ENCODE measurements at regions of chr19 and their contacts with region 1.

Region 1: DNA sequence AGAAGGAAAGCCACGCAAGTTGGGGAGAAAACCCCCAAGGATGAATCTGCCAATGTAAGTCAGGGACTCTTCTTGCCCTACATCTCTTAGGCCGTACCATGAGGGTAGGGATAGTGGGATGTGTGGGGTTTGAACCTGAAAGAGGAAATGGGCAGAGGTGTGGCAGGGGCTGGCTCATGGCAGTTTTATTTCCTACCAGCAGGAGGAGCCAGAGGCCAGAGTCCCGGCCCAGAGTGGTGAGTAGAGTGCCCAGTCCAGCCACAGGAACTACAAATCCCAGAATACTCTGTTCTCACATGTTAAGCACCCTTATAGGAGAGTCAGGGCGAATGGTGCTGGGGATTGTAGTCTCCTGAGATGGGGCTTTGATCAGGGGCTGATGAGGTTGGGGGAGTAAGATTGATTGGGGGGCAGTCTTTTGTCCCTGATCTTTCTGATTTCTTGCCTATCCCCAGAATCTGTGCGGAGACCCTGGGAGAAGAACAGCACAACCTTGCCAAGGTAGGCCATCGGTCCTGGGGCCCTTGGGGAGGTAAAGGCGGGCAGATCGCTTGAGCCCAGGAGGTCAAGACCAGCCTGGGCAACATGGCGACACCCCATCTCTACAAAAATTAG is 16.5 kb downstream of the VASP start:
- DNase-seq: peak; percentile 75 to 88
- ATAC-seq: peak; percentile 91 to 98 (median 96)
- H3K4me3 ChIP-seq: no peak overlapping the region
- H3K27ac ChIP-seq: peak overlapping the region; percentile 59
- H3K4me1 ChIP-seq: peaks cover 3% of the 10 kb centered on the region
- H3K27me3 ChIP-seq: peaks cover 0 to 1% (median 1%) of the 10 kb centered on the region in 3 donors
- CTCF ChIP-seq: peak; percentile 89

Region 2: DNA sequence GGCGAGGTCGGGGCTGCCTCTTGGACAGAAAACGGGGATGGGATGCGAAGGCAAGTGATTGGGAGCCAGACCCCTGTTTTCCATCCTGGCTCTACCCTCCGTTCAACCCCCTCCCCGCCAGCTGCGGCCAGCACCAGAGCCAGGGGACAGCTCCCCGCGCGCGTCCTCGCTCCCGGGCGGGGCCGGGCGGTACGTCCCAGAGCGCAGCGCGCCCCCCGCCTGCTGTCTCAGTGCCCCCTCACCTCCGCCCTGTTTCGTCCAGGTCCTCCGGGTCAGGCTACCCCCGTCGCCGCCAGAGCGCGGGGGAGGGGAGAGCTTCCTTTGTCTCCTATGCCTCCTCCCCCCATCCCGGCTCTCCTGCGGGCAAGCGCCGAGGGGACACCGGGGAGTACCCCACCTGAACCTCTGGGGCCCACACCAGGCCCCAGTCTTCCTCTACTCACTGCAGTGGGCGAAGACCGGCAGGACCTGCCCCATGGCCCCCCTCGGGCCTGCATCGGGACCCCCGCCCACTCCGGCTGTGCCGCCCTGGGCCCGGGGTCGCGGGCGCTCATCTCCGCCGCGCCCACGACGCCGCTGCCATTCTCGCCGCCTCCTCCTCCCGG is 27.3 kb before region 1 on chr19:
- intact Hi-C with region 1: loop called in 1 of 2 experiments (anchors 1 kb)
- DNase-seq: peak; percentile 49 to 74
- ATAC-seq: peak in 1 of 4 donors; percentile 9
- H3K4me3 ChIP-seq: peak overlapping the region; percentile 79
- H3K27ac ChIP-seq: no peak overlapping the region
- H3K4me1 ChIP-seq: peaks cover 21% of the 10 kb centered on the region
- H3K27me3 ChIP-seq: peaks cover 0 to 40% (median 2%) of the 10 kb centered on the region in 3 donors
- CTCF ChIP-seq: no peak

Region 3: DNA sequence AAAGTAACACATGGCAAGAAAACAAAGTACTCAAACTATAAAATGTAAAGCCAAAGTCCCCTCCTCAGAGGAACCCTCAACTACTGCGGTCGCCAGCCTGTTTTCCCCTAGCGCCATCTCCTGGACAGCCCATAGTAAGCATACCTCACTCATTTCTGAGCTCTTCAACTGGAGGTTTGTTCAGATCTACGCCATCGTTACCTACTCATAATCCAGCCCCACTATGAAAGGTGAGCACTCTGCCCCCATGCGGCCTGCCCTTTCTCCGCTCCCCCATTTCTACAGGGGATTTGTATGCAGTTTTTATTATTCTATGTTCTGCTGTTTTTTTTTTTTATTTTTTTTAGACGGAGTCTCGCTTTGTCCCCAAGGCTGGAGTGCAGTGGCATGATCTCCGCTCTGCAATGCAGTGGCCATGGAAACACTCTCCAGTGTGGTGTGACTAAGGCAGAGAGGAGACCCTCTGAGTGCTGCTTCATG is 34.7 kb after region 1 on chr19:
- intact Hi-C with region 1: loop called (anchors 5 kb)
- DNase-seq: no peak
- ATAC-seq: peak; percentile 47 to 78 (median 76)
- H3K4me3 ChIP-seq: no peak overlapping the region
- H3K27ac ChIP-seq: no peak overlapping the region
- H3K4me1 ChIP-seq: no peaks in the 10 kb centered on the region
- H3K27me3 ChIP-seq: no peaks in the 10 kb centered on the region
- CTCF ChIP-seq: peak; percentile 35

Region 4: DNA sequence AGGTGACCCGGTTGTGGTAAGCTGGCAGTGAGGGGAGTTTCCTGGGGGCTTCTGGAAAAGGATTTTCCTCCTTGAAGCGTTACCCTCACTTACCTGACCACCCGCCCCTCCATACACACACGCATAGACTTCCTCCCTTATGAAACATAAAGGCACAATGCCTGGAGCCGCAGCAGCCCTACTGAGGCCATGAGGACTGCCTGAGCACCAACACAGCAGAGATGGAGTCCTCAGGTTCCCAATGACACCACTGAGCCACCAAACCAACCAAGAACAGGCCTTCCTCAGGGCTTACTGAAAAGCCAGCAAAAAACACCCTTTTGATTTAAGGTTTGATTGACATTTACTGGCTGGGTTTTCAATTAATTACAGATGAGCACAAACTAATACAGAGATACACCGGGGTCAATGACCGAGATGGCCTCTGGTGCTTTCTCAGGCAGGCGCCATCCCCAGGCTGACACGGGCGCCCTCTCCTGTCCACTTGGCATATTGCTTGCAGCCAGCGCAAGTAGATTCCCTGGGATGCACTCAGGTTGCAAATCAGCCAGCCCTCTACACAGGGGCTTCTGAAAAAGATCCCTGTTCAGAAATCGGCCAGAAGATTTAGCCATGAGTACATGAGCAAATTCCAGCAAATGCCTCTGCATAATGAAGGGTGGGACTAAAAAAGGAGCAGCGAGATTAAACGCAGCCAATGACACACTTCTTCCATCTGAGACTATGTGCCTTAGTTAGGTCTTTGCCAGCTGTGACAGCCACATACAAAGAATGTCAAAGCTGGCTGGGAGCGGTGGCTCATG is 46.1 kb after region 1 on chr19:
- intact Hi-C with region 1: loop called in 1 of 2 experiments (anchors 2 kb)
- DNase-seq: peak; percentile 63 to 83
- ATAC-seq: peak; percentile 75 to 81 (median 78)
- H3K4me3 ChIP-seq: peak overlapping the region; percentile 2
- H3K27ac ChIP-seq: peak overlapping the region; percentile 87
- H3K4me1 ChIP-seq: peaks cover 47% of the 10 kb centered on the region
- H3K27me3 ChIP-seq: no peaks in the 10 kb centered on the region
- CTCF ChIP-seq: peak; percentile 77

Region 5: GRCh38 chr19:45643024-45643926 is 119.5 kb after region 1 on chr19:
- intact Hi-C with region 1: loop called (anchors 1 to 2 kb)
- DNase-seq: peak; percentile 83 to 91
- ATAC-seq: peak; percentile 58 to 77 (median 72)
- H3K4me3 ChIP-seq: no peak overlapping the region
- H3K27ac ChIP-seq: no peak overlapping the region
- H3K4me1 ChIP-seq: peaks cover 19% of the 10 kb centered on the region
- H3K27me3 ChIP-seq: peaks cover 0 to 31% (median 0%) of the 10 kb centered on the region in 3 donors
- CTCF ChIP-seq: peak; percentile 99